Gastrocnemius medialis (tissue), 4 donors: ENCODE measurements at regions of chr21 and their contacts with region 1.

Region 1: GRCh38 chr21:35051287-35051818 is 2.3 kb upstream of the RUNX1 start:
- DNase-seq: peak; percentile 88 to 94
- ATAC-seq: peak; percentile 76 to 80
- H3K4me3 ChIP-seq: peak overlapping the region in 1 of 4 donors; percentile 26
- H3K27ac ChIP-seq: peak overlapping the region; percentile 81 to 86 (median 84)
- H3K4me1 ChIP-seq: peaks cover 54 to 63% of the 10 kb centered on the region in 2 donors
- H3K27me3 ChIP-seq: no peaks in the 10 kb centered on the region
- CTCF ChIP-seq: peak; percentile 68 to 80 (median 70)
- POLR2A ChIP-seq: peak in 1 of 2 donors; percentile 10

Region 2: GRCh38 chr21:34693192-34693810 is 358.1 kb before region 1 on chr21:
- in situ Hi-C with region 1: no loop called
- intact Hi-C with region 1: loop called (anchors 5 kb)
- DNase-seq: peak in 1 of 2 donors; percentile 38
- ATAC-seq: peak; percentile 29 to 43
- H3K4me3 ChIP-seq: no peak overlapping the region
- H3K27ac ChIP-seq: no peak overlapping the region
- H3K4me1 ChIP-seq: peaks cover 14 to 24% of the 10 kb centered on the region in 2 donors
- H3K27me3 ChIP-seq: no peaks in the 10 kb centered on the region
- CTCF ChIP-seq: peak; percentile 56 to 84 (median 75)
- POLR2A ChIP-seq: no peak

Region 3: DNA sequence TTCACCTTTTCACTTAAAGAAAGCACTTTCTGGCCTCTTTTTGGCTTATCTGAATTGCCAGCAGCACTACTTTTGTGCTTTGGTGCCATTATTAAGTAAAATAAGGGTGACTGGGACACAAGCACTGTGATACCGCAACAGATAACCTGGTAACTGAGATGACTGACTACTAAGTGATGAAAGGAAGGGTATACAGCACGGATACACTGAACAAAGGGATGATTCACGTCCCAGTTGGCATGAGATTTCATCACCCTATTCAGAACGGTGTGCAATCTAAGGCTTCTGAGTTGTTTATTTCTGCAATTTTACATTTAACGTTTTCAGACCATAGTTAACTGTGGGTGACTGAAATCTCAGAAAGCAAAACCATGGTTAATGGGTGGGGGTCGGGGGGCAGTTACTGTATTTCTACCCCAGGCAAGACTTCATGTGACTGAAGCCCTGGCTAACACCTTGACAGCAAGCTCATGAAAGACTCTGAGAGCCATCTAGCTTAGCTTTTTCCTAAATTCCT is 279.8 kb before region 1 on chr21:
- in situ Hi-C with region 1: loop called in 2 of 4 experiments (anchors 25 kb)
- intact Hi-C with region 1: no loop called
- DNase-seq: no peak
- ATAC-seq: peak in 1 of 2 donors; percentile 64
- H3K4me3 ChIP-seq: no peak overlapping the region
- H3K27ac ChIP-seq: no peak overlapping the region
- H3K4me1 ChIP-seq: no peaks in the 10 kb centered on the region
- H3K27me3 ChIP-seq: no peaks in the 10 kb centered on the region
- CTCF ChIP-seq: no peak
- POLR2A ChIP-seq: no peak

Region 4: GRCh38 chr21:35189077-35189863 is 137.9 kb after region 1 on chr21:
- in situ Hi-C with region 1: no loop called
- intact Hi-C with region 1: loop called (anchors 1 kb)
- DNase-seq: no peak
- ATAC-seq: no peak
- H3K4me3 ChIP-seq: peak overlapping the region in 1 of 4 donors; percentile 15
- H3K27ac ChIP-seq: peak overlapping the region; percentile 76 to 87 (median 81)
- H3K4me1 ChIP-seq: peaks cover 22 to 25% of the 10 kb centered on the region in 2 donors
- H3K27me3 ChIP-seq: no peaks in the 10 kb centered on the region
- CTCF ChIP-seq: no peak
- POLR2A ChIP-seq: no peak

Region 5: DNA sequence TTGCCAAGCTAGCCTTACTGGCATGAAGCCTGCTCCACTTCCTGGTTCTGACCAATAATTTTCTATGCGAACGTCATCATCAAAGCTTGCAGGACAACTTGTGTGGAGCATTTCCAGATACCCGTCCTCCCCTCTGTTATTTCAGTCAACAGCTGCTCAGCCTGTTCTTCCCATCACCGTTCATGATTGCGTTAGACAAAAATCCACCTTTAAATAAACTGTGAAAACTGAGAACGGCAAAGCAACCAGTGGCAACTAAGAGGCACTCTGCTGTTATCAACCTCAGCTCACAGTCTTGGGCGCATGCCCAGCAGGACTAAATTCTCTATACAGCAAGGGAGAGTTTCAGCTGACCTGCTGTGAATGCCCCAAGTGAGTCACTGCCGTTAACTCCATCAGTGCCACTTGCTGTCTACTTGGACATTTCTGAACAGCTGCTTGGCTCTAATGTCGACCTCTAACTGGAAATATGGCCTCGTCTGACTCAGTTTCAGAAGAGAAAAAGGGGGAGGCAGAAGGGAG is 205.2 kb after region 1 on chr21:
- in situ Hi-C with region 1: loop called in 1 of 4 experiments (anchors 10 kb)
- intact Hi-C with region 1: loop called (anchors 1 kb)
- DNase-seq: peak; percentile 96 to 99
- ATAC-seq: peak; percentile 82 to 88
- H3K4me3 ChIP-seq: no peak overlapping the region
- H3K27ac ChIP-seq: peak overlapping the region; percentile 84 to 91 (median 87)
- H3K4me1 ChIP-seq: peaks cover 49 to 61% of the 10 kb centered on the region in 2 donors
- H3K27me3 ChIP-seq: no peaks in the 10 kb centered on the region
- CTCF ChIP-seq: no peak
- POLR2A ChIP-seq: no peak

Region 6: DNA sequence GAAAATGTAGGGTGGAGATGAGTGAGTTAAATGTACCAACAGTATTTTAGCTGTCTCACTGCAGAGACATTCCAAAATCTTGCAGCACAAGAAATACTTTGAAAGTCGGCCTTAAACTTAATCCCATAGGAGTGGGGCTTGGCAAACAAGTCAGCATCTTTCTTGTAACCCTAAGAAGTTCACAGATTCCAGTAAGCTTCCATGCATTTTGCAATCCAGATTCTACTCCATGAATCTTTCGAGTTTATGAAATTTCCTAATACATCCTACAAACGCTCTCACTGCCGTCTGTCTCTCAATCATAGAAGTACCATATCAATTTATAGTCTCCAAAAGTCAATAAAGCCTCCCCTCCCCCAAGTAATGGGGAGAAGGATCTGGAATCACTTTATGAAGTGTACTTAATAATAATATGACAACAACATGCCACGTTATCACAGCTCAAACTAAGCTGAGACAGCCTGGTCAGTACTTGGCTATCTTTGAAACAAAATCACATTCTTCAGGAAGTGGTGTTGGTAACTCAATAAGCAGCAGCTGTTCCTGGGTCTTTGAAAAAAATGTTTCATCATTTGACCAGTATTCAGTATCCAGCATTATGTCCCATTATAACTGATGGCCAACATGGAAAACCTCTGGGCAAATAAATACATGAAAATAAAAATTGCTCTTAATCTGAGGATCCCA is 315.2 kb after region 1 on chr21:
- in situ Hi-C with region 1: loop called in 1 of 4 experiments (anchors 25 kb)
- intact Hi-C with region 1: loop called (anchors 10 kb)
- DNase-seq: peak; percentile 34 to 60
- ATAC-seq: peak; percentile 91 to 94
- H3K4me3 ChIP-seq: no peak overlapping the region
- H3K27ac ChIP-seq: peak overlapping the region; percentile 66 to 82 (median 69)
- H3K4me1 ChIP-seq: peaks cover 17 to 20% of the 10 kb centered on the region in 2 donors
- H3K27me3 ChIP-seq: no peaks in the 10 kb centered on the region
- CTCF ChIP-seq: no peak
- POLR2A ChIP-seq: no peak

Region 7: GRCh38 chr21:35925497-35925896 is 874.1 kb after region 1 on chr21:
- in situ Hi-C with region 1: no loop called
- intact Hi-C with region 1: loop called (anchors 5 kb)
- DNase-seq: no peak
- ATAC-seq: no peak
- H3K4me3 ChIP-seq: no peak overlapping the region
- H3K27ac ChIP-seq: peak overlapping the region in 3 of 4 donors; percentile 34 to 66 (median 66)
- H3K4me1 ChIP-seq: no peaks in the 10 kb centered on the region
- H3K27me3 ChIP-seq: no peaks in the 10 kb centered on the region
- CTCF ChIP-seq: no peak
- POLR2A ChIP-seq: no peak